GM12878 (cell line): ENCODE measurements at regions of chr6 and their contacts with region 1.

Region 1: GRCh38 chr6:12605888-12606345 is 110.7 kb upstream of the PHACTR1 start:
- DNase-seq: peak; percentile 90
- ATAC-seq: peak; percentile 66
- H3K4me3 ChIP-seq: 0 out of 2 replicates have a peak overlapping the region, but pooled peaks have one; percentile 28
- H3K27ac ChIP-seq: peak overlapping the region; percentile 41
- H3K4me1 ChIP-seq: peaks cover 46% of the 10 kb centered on the region
- H3K27me3 ChIP-seq: no peaks in the 10 kb centered on the region
- CTCF ChIP-seq: peak; percentile 70 to 87 (median 80); a peak in 5 of 6 replicates
- EP300 ChIP-seq: peak in 1 of 2 experiments; percentile 64; a peak in 2 of 4 replicates
- POLR2A ChIP-seq: no peak
- RAD21 ChIP-seq: peak; percentile 80

Region 2: DNA sequence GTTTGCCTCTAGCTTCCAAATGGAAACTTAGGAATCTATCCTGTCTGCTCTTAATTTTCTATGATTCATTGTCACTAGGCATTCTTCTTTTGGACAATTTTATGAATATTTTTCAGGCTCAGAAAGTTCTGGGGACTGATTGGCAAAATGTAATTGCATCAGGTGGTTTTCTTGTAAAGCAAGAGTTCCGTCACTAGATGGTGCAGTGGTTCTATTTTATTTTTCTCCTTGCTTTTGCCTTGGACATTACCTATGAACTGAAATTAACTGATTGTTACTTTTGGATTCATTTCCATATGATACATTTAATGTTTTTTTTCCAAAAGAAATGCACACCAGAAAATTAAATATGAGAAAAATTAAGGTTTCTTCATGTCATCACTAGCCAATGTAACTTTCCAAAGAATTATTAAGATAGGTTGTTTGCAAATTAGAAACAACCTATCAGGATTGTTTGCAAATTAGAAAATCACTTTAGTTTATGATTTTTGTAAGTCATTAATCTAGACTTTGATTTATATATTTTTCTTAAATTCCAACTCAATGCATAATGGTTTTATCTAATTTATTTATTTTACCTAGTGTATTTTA is 1020.4 kb before region 1 on chr6:
- CTCF ChIA-PET with region 1: interaction called, 16 read pairs
- POLR2A ChIA-PET with region 1: interaction called, 4 read pairs
- RAD21 ChIA-PET with region 1: interaction called, 10 read pairs
- SMC1A ChIA-PET with region 1: interaction called, 6 read pairs
- in situ Hi-C with region 1: loop called (anchors 5 kb)
- intact Hi-C with region 1: loop called (anchors 1 kb)
- DNase-seq: peak; percentile 32
- ATAC-seq: peak; percentile 70
- H3K4me3 ChIP-seq: no peak overlapping the region
- H3K27ac ChIP-seq: no peak overlapping the region
- H3K4me1 ChIP-seq: no peaks in the 10 kb centered on the region
- H3K27me3 ChIP-seq: no peaks in the 10 kb centered on the region
- CTCF ChIP-seq: peak; percentile 45 to 67 (median 59); a peak in 5 of 6 replicates
- EP300 ChIP-seq: no peak
- POLR2A ChIP-seq: no peak
- RAD21 ChIP-seq: peak; percentile 77

Region 3: GRCh38 chr6:11824986-11825385 is 780.9 kb before region 1 on chr6:
- CTCF ChIA-PET with region 1: interaction called, 3 read pairs
- POLR2A ChIA-PET with region 1: no interaction called
- RAD21 ChIA-PET with region 1: no interaction called
- SMC1A ChIA-PET with region 1: interaction called, 9 read pairs
- in situ Hi-C with region 1: loop called (anchors 5 kb)
- intact Hi-C with region 1: loop called (anchors 5 kb)
- DNase-seq: peak; percentile 91
- ATAC-seq: peak; percentile 86
- H3K4me3 ChIP-seq: no peak overlapping the region
- H3K27ac ChIP-seq: peak overlapping the region; percentile 70
- H3K4me1 ChIP-seq: peaks cover 47% of the 10 kb centered on the region
- H3K27me3 ChIP-seq: no peaks in the 10 kb centered on the region
- CTCF ChIP-seq: no peak
- EP300 ChIP-seq: peak; percentile 90; a peak in 3 of 4 replicates
- POLR2A ChIP-seq: no peak
- RAD21 ChIP-seq: peak; percentile 14

Region 4: GRCh38 chr6:11964729-11965335 is 641.1 kb before region 1 on chr6:
- CTCF ChIA-PET with region 1: no interaction called
- POLR2A ChIA-PET with region 1: no interaction called
- RAD21 ChIA-PET with region 1: no interaction called
- SMC1A ChIA-PET with region 1: no interaction called
- in situ Hi-C with region 1: no loop called
- intact Hi-C with region 1: no loop called
- DNase-seq: no peak
- ATAC-seq: no peak
- H3K4me3 ChIP-seq: no peak overlapping the region
- H3K27ac ChIP-seq: no peak overlapping the region
- H3K4me1 ChIP-seq: peaks cover 9% of the 10 kb centered on the region; the same call in 1 of the 2 replicates
- H3K27me3 ChIP-seq: no peaks in the 10 kb centered on the region
- CTCF ChIP-seq: no peak
- EP300 ChIP-seq: no peak
- POLR2A ChIP-seq: no peak
- RAD21 ChIP-seq: no peak

Region 5: GRCh38 chr6:12150812-12151432 is 455.0 kb before region 1 on chr6:
- CTCF ChIA-PET with region 1: interaction called, 4 read pairs
- POLR2A ChIA-PET with region 1: no interaction called
- RAD21 ChIA-PET with region 1: no interaction called
- SMC1A ChIA-PET with region 1: interaction called, 4 read pairs
- in situ Hi-C with region 1: no loop called
- intact Hi-C with region 1: loop called (anchors 2 kb)
- DNase-seq: no peak
- ATAC-seq: peak; percentile 46; the same call in 2 of the 3 replicates
- H3K4me3 ChIP-seq: no peak overlapping the region
- H3K27ac ChIP-seq: no peak overlapping the region
- H3K4me1 ChIP-seq: no peaks in the 10 kb centered on the region
- H3K27me3 ChIP-seq: no peaks in the 10 kb centered on the region
- CTCF ChIP-seq: peak; percentile 28 to 40 (median 32)
- EP300 ChIP-seq: no peak
- POLR2A ChIP-seq: no peak
- RAD21 ChIP-seq: peak; percentile 63

Region 6: DNA sequence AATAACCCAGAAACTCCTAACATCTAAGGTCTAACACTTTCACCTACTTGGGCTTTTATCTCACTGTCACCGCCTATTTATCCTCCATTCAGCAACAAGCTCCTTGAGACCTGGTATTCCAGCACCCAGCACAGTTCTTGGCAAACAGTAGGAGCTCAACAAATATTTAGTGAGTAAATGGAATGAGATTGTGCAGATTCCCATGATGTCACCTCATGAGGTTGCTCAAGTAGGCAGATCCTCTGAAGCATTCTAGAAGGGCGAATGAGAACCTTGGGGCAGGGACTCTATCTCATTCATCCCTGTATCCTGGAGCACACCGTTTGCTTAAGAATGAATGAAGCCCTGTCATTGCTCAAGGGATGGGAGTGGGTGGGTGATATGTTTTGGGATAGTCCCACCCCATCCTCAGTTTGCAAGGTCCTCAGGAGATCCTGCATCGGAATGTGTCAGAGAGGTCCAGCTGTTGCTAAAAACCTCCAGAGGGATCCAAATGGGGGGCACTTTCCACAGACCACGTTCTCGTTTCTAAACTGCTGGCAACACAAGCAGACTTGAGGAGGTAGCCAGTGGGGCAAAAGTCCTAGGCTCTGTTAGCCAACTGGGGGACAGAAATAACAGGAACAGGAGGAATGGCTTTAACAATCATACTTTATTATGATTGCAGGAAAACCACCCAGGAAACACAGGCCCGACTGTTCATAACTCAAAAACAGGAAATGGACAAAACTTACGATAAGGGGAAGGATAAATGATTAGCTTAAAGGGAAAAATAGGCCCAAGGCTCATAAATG is 273.8 kb before region 1 on chr6:
- CTCF ChIA-PET with region 1: interaction called, 14 read pairs
- POLR2A ChIA-PET with region 1: interaction called, 5 read pairs
- RAD21 ChIA-PET with region 1: interaction called, 31 read pairs
- SMC1A ChIA-PET with region 1: interaction called, 77 read pairs
- in situ Hi-C with region 1: no loop called
- intact Hi-C with region 1: no loop called
- DNase-seq: no peak
- ATAC-seq: no peak
- H3K4me3 ChIP-seq: no peak overlapping the region
- H3K27ac ChIP-seq: no peak overlapping the region
- H3K4me1 ChIP-seq: peaks cover 21% of the 10 kb centered on the region
- H3K27me3 ChIP-seq: no peaks in the 10 kb centered on the region
- CTCF ChIP-seq: no peak
- EP300 ChIP-seq: no peak
- POLR2A ChIP-seq: no peak
- RAD21 ChIP-seq: no peak

Region 7: GRCh38 chr6:12383448-12383847 is 222.5 kb before region 1 on chr6:
- CTCF ChIA-PET with region 1: interaction called, 4 read pairs
- POLR2A ChIA-PET with region 1: no interaction called
- RAD21 ChIA-PET with region 1: interaction called, 9 read pairs
- SMC1A ChIA-PET with region 1: interaction called, 4 read pairs
- in situ Hi-C with region 1: no loop called
- intact Hi-C with region 1: loop called (anchors 1 kb)
- DNase-seq: peak; percentile 72
- ATAC-seq: peak; percentile 98
- H3K4me3 ChIP-seq: no peak overlapping the region
- H3K27ac ChIP-seq: no peak overlapping the region
- H3K4me1 ChIP-seq: peaks cover 11% of the 10 kb centered on the region
- H3K27me3 ChIP-seq: no peaks in the 10 kb centered on the region
- CTCF ChIP-seq: no peak
- EP300 ChIP-seq: peak; percentile 65 to 72; a peak in 2 of 4 replicates
- POLR2A ChIP-seq: no peak
- RAD21 ChIP-seq: no peak

Region 8: GRCh38 chr6:12637960-12638641 is 32.2 kb after region 1 on chr6:
- CTCF ChIA-PET with region 1: interaction called, 30 read pairs
- POLR2A ChIA-PET with region 1: interaction called, 4 read pairs
- RAD21 ChIA-PET with region 1: interaction called, 18 read pairs
- SMC1A ChIA-PET with region 1: interaction called, 9 read pairs
- in situ Hi-C with region 1: no loop called
- intact Hi-C with region 1: no loop called
- DNase-seq: peak; percentile 16
- ATAC-seq: peak; percentile 94
- H3K4me3 ChIP-seq: no peak overlapping the region
- H3K27ac ChIP-seq: no peak overlapping the region
- H3K4me1 ChIP-seq: no peaks in the 10 kb centered on the region
- H3K27me3 ChIP-seq: no peaks in the 10 kb centered on the region
- CTCF ChIP-seq: peak; percentile 77 to 87 (median 80)
- EP300 ChIP-seq: no peak
- POLR2A ChIP-seq: no peak
- RAD21 ChIP-seq: peak; percentile 82